ENCODE measurements at regions of chr22 and their contacts with region 1.

Region 1: GRCh38 chr22:36065775-36066559 is 37.3 kb upstream of the RBFOX2 start:
- DNase-seq: peak; percentile 87
- H3K4me3 ChIP-seq: peak overlapping the region; percentile 65
- H3K27ac ChIP-seq: peak overlapping the region; percentile 78
- H3K27me3 ChIP-seq: no peaks in the 10 kb centered on the region
- CTCF ChIP-seq: peak; percentile 96

Region 2: GRCh38 chr22:35756722-35757121 is 309.2 kb before region 1 on chr22:
- CTCF ChIA-PET with region 1: interaction called, 10 read pairs
- POLR2A ChIA-PET with region 1: no interaction called
- DNase-seq: no peak
- H3K4me3 ChIP-seq: no peak overlapping the region
- H3K27ac ChIP-seq: no peak overlapping the region
- H3K27me3 ChIP-seq: no peaks in the 10 kb centered on the region
- CTCF ChIP-seq: no peak

Region 3: GRCh38 chr22:35900483-35901168 is 165.3 kb before region 1 on chr22:
- CTCF ChIA-PET with region 1: interaction called, 25 read pairs
- POLR2A ChIA-PET with region 1: interaction called, 4 read pairs
- DNase-seq: no peak
- H3K4me3 ChIP-seq: no peak overlapping the region
- H3K27ac ChIP-seq: no peak overlapping the region
- H3K27me3 ChIP-seq: no peaks in the 10 kb centered on the region
- CTCF ChIP-seq: no peak

Region 4: GRCh38 chr22:35947794-35948425 is 118.1 kb before region 1 on chr22:
- CTCF ChIA-PET with region 1: interaction called, 26 read pairs
- POLR2A ChIA-PET with region 1: no interaction called
- DNase-seq: peak; percentile 13
- H3K4me3 ChIP-seq: no peak overlapping the region
- H3K27ac ChIP-seq: no peak overlapping the region
- H3K27me3 ChIP-seq: no peaks in the 10 kb centered on the region
- CTCF ChIP-seq: no peak

Region 5: DNA sequence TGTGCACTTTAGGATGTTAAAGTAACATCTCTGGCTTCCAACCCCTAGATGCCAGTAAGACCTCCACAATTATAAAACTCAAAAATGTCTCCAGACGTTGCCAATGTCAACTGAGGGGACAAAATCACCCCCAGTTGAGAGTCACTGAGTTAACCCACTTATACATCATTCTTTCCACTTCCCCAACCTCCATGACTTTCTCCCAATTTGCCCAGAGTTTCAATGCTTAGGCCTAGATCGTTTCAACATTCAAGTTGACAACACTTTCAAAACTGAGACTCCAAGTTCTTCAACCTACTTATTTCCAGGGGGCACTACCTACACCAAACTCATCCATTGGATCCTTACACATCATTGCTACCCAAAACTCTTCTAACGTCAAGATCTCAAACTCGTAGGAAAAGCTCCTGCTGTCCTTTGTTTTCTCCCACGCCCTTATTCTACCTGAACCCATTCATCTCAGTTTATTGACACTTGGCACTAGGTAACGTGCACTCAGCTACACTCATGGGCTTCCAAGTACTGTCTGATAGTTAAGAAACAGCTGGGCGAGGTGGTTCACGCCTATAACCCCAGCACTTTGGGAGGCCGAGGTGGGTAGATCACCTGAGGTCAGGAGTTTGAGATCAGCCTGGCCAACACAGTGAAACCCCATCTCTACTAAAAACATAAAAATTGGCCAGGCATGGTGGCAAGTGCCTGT is 61.8 kb before region 1 on chr22:
- CTCF ChIA-PET with region 1: interaction called, 28 read pairs
- POLR2A ChIA-PET with region 1: no interaction called
- DNase-seq: no peak
- H3K4me3 ChIP-seq: no peak overlapping the region
- H3K27ac ChIP-seq: no peak overlapping the region
- H3K27me3 ChIP-seq: no peaks in the 10 kb centered on the region
- CTCF ChIP-seq: no peak

Region 6: GRCh38 chr22:36081023-36081431 is 15.1 kb after region 1 on chr22:
- CTCF ChIA-PET with region 1: interaction called, 102 read pairs
- POLR2A ChIA-PET with region 1: interaction called, 3 read pairs
- DNase-seq: peak; percentile 74
- H3K4me3 ChIP-seq: no peak overlapping the region
- H3K27ac ChIP-seq: peak overlapping the region; percentile 95
- H3K27me3 ChIP-seq: no peaks in the 10 kb centered on the region
- CTCF ChIP-seq: no peak

Region 7: DNA sequence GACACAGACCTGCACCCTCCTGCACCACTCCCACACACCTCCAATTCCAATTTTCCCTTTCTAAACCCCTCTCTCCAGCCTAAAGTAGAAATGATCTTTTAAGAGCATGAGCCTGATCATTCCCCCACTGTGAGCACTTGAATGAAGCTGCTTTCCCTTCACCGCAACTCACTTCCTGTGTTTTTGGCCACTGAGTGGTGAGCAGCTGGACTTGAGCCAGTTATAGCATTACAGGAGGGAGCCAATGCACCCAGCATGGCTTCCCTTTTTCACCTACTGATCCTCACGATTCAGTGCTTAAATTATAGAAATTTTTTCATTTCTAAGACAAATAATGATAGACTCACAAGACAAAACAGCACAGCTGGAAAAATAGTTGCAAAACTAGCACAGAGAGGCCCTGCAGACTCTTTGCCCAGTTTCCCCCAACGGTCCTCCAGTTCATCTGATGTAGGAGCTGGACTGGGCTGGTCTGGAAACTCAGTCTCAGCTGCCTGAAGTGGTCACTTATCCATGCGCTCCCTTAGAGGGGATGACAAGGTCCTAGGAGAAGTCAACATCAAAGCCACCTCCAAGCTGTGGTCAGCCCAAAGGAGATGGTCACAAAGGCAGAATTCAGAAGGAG is 145.4 kb after region 1 on chr22:
- CTCF ChIA-PET with region 1: no interaction called
- POLR2A ChIA-PET with region 1: no interaction called
- DNase-seq: no peak
- H3K4me3 ChIP-seq: no peak overlapping the region
- H3K27ac ChIP-seq: no peak overlapping the region
- H3K27me3 ChIP-seq: peaks cover 44% of the 10 kb centered on the region
- CTCF ChIP-seq: no peak

Region 8: DNA sequence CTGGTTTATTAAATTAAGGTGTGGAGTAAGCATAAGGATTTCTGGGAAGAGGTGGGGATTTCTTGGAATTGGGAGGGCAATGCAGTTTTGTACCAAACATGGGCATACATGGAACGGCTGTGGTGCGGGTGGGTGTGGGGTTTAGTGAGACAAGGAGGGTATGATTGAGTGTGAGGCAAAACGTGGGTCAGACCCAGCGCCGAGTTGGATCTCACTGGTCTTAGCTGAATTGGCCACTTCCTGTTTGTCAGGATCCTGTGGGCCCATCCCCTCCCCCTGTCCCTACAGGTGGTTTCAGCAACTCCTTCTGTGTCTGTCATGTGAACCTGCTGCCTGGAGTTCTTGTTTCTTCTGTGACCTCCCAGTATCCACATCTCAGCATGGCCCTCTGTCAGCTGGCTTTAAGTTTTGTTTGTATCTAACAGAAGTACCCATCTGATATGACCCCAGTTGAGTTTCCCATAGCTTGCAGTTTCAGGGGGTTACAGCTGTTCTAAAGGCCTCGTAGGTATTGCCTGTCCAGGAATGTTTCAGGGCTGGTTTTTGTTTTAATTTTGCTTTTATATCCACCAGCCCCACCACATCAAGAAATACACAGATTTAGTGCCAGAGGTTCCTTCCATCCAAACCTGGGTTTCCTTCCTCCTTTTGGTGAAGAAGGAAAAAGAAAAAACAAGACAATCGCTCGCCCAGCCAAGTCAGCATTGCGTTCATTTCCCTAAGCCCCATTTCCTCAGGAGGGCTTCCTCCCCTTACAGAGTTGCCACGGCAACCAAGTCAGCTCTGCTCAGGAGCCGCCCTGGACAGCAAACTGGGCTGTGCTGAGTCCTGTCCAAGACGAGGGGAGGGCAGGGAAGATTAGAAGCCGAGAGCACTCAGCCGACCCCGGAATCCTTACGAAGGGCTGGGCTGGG is 193.0 kb after region 1 on chr22:
- CTCF ChIA-PET with region 1: no interaction called
- POLR2A ChIA-PET with region 1: no interaction called
- DNase-seq: no peak
- H3K4me3 ChIP-seq: no peak overlapping the region
- H3K27ac ChIP-seq: no peak overlapping the region
- H3K27me3 ChIP-seq: no peaks in the 10 kb centered on the region
- CTCF ChIP-seq: no peak

Measured in AG04450 (cell line).